Transverse colon (tissue), 4 donors: ENCODE measurements at regions of chr6 and their contacts with region 1.

Region 1: DNA sequence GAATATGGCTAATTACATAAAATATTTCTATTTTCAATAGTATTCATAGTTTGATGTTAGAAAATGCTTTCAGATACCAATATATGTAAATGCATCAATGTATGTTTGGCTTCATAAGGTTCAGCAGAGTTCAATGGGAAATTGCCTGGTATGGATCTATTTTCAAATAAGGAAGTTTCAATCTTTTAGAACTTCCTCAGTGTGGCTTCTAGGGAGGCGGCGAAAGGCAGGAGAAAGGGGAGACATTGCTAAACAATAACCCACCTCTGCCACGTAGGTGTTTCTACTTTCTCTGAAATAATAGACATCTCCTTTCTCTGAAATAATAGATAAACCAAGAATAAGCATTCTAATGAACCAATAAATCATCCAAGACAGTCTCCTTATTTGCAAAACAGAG is 237.7 kb upstream of the RAB32 start:
- DNase-seq: no peak
- H3K4me3 ChIP-seq: no peak overlapping the region
- H3K27ac ChIP-seq: no peak overlapping the region
- H3K4me1 ChIP-seq: no peaks in the 10 kb centered on the region
- H3K27me3 ChIP-seq: no peaks in the 10 kb centered on the region
- CTCF ChIP-seq: no peak
- EP300 ChIP-seq: no peak
- POLR2A ChIP-seq: no peak

Region 2: DNA sequence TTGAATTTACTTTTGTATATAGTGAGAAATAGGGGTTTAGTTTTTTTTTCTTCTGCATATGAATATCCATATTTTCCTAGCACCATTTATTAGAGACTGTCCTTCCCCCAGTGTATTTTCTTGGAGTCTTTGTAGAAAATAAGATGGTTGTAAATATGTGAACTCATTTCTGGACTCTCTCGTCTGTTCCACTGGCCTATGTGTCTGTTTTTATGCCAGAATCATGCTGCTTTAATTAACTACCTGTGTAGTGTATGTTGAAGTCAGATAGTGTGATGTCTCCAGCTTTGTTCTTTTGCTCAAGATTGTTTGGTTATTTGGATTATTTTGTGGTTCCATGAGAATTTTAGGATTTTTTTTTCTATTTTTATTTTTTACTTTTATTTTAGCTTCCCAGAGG is 61.1 kb after region 1 on chr6:
- in situ Hi-C with region 1: no loop called
- intact Hi-C with region 1: loop called (anchors 2 kb)
- DNase-seq: no peak
- H3K4me3 ChIP-seq: no peak overlapping the region
- H3K27ac ChIP-seq: no peak overlapping the region
- H3K4me1 ChIP-seq: peaks cover 0 to 3% (median under 1%) of the 10 kb centered on the region in 4 donors
- H3K27me3 ChIP-seq: no peaks in the 10 kb centered on the region
- CTCF ChIP-seq: no peak
- EP300 ChIP-seq: no peak
- POLR2A ChIP-seq: no peak